ENCODE measurements at regions of chr3 and their contacts with region 1.

Region 1: GRCh38 chr3:80000039-80000438 is 232.2 kb upstream of the ROBO1 start:
- DNase-seq: no peak
- H3K4me3 ChIP-seq: no peak overlapping the region
- H3K27ac ChIP-seq: no peak overlapping the region
- H3K4me1 ChIP-seq: no peaks in the 10 kb centered on the region
- H3K27me3 ChIP-seq: no peaks in the 10 kb centered on the region
- CTCF ChIP-seq: no peak

Region 2: GRCh38 chr3:79973917-79974595 is 26.0 kb before region 1 on chr3:
- CTCF ChIA-PET with region 1: no interaction called
- POLR2A ChIA-PET with region 1: no interaction called
- intact Hi-C with region 1: loop called (anchors 1 kb)
- DNase-seq: no peak
- H3K4me3 ChIP-seq: no peak overlapping the region
- H3K27ac ChIP-seq: no peak overlapping the region
- H3K4me1 ChIP-seq: peaks cover 15% of the 10 kb centered on the region
- H3K27me3 ChIP-seq: no peaks in the 10 kb centered on the region
- CTCF ChIP-seq: no peak